Astrocyte of the cerebellum (primary cell): ENCODE measurements at regions of chr7 and their contacts with region 1.

Region 1: DNA sequence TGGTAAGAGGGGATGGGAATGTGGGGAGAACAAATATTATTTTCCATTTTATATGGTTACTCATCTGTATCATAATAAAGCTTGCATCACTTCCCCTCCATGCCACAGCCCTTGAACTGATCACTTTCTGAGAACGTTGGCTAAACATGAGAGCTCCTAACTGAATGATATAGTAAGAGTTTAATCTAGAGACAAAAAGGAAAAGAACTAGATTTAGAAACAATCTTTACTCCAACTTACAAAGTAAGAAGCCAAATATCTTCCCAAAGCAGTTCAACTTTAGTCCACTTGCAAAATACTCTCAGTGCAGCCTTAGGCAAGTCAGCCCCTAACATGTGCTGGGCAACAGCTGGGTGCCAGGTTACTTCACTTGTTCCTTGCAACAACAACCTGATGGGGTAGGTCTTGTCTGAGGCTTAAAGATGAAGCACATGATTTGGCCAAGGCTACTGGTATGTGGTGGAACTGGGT is 20.3 kb downstream of the SMURF1 start:
- DNase-seq: no peak
- H3K4me3 ChIP-seq: no peak overlapping the region
- CTCF ChIP-seq: no peak

Region 2: DNA sequence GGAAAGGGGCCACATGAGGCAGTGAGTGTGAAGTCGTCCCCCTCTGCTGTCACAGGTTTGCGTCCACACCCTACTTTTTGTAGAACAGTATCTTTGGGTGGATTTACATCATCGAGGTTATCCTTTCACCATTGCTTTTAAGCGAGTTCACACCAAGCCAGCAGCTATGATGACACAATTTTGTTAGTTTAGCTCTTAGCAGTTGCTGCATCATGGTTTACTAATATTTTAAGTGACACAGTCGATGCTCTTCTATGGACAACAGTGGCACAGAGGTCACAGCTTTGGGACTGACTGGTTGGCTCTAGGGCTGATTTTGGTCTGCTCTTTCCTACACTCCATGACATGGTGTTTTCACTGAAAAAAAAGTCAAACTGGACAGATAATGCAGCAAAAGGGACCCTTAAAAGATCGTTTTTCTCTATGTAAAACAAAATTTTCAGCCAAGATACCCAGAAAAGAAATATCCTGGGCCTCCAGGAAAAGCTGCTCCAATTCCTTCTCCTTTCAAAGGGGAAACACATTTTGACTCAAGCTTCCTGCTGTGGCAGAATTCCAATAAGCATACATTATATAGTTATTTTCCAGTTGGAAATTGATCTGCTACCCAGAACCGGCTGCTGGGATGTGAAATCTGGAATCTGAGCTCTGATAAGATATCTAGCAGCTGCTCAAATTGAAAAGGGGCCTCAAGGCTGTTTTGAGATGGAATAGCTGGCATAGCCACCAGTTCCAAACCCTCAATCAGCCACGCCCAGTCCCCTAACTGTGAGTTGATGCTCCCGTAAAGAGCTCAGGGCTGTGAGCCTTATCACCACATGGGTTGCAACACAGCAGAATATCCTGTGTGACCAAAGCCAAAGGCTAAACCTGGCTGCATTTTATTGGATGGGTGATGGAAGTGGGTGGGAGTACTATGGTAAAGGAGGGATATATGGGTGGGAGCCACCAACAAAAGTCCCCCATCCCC is 93.9 kb before region 1 on chr7:
- in situ Hi-C with region 1: loop called (anchors 5 kb)
- DNase-seq: no peak
- H3K4me3 ChIP-seq: no peak overlapping the region
- CTCF ChIP-seq: no peak

Region 3: GRCh38 chr7:99090771-99091542 is 32.6 kb before region 1 on chr7:
- in situ Hi-C with region 1: no loop called
- DNase-seq: peak; percentile 36
- H3K4me3 ChIP-seq: no peak overlapping the region
- CTCF ChIP-seq: no peak

Region 4: GRCh38 chr7:99218406-99219184 is 95.0 kb after region 1 on chr7:
- in situ Hi-C with region 1: loop called (anchors 5 kb)
- DNase-seq: no peak
- H3K4me3 ChIP-seq: no peak overlapping the region
- CTCF ChIP-seq: no peak